ENCODE measurements at regions of chr11 and their contacts with region 1.

Region 1: GRCh38 chr11:69296890-69297786 is 3.2 kb downstream of the MYEOV start:
- DNase-seq: peak; percentile 80
- H3K4me3 Mint-ChIP-seq: peak overlapping the region; percentile 46
- H3K27ac Mint-ChIP-seq: peak overlapping the region; percentile 79
- H3K4me1 Mint-ChIP-seq: peaks cover 43% of the 10 kb centered on the region
- H3K27me3 Mint-ChIP-seq: no peaks in the 10 kb centered on the region

Region 2: DNA sequence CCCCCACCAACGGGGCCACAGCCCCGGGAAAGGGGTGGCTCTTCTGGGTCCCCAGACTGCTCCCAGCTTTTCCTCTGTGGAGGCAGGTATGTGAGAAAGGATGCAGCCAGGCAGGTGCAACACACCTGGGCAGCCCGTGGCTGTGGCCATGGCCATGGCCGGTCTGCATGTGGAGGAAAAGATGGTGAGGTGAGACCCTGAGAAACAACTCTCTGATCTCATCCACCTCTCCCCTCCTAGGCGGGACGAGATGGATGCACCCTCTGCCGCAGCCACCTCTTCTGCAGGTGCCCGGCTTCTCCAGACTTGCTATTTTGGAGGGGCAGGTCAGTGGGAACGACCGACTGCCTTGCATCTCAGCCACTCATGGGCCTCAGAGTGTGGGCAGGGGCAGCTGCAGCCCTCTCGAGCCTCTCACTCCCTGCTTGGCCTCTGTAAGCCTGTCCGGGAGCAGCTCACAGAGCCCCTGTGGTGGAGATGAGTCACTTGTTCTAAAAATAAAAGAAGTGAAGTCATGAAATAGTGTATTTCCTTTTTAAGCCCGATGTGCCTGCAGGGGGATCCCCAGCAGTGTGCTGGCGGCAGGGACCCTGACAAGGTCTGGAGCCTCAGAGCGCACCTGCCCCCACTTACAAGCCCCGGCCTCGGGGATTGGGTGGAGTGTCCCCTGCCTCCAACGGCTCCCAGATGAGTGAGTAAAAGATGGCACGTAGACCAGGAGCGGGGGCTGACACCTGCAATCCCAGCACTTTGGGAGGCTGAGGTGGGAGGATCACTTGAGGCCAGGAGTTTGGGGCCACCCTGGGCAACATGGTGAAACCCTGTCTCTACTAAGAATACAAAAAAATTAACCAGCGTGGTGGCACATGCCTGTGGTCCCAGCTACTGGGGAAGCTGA is 130.7 kb before region 1 on chr11:
- intact Hi-C with region 1: loop called (anchors 2 kb)
- DNase-seq: peak; percentile 24
- H3K4me3 Mint-ChIP-seq: peak overlapping the region; percentile 45
- H3K27ac Mint-ChIP-seq: peak overlapping the region; percentile 79
- H3K4me1 Mint-ChIP-seq: peaks cover 13% of the 10 kb centered on the region
- H3K27me3 Mint-ChIP-seq: peaks cover 12% of the 10 kb centered on the region

Region 3: GRCh38 chr11:69311767-69312385 is 14.7 kb after region 1 on chr11:
- intact Hi-C with region 1: loop called (anchors 1 kb)
- DNase-seq: no peak
- H3K4me3 Mint-ChIP-seq: no peak overlapping the region
- H3K27ac Mint-ChIP-seq: peak overlapping the region; percentile 81
- H3K4me1 Mint-ChIP-seq: peaks cover 14% of the 10 kb centered on the region
- H3K27me3 Mint-ChIP-seq: no peaks in the 10 kb centered on the region

Region 4: DNA sequence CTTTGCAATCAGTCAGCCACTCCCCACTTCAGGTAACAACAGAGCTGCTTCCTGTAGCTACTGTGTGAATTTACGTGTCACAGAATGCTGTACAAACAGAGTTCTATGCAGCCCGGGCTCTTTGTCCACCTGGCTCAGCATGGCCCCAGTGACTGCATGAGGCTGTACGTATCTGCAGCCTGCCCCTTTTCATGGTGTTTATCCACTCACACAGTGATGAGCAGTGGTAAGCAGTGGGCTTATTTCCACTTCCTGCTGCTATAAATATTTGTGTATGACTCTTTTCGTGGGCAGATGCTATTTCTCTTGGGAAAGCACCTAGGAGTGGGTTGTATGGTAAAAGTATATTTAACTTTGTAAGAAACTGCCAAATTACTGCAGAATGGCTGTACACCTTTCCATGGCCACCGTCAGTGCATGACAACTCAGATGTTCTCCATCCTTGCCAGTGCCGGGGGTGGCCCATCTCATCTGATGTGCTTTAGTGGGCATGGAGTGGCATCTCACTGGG is 40.1 kb after region 1 on chr11:
- intact Hi-C with region 1: loop called (anchors 1 kb)
- DNase-seq: peak; percentile 9
- H3K4me3 Mint-ChIP-seq: no peak overlapping the region
- H3K27ac Mint-ChIP-seq: peak overlapping the region; percentile 79
- H3K4me1 Mint-ChIP-seq: peaks cover 29% of the 10 kb centered on the region
- H3K27me3 Mint-ChIP-seq: peaks cover 8% of the 10 kb centered on the region

Region 5: DNA sequence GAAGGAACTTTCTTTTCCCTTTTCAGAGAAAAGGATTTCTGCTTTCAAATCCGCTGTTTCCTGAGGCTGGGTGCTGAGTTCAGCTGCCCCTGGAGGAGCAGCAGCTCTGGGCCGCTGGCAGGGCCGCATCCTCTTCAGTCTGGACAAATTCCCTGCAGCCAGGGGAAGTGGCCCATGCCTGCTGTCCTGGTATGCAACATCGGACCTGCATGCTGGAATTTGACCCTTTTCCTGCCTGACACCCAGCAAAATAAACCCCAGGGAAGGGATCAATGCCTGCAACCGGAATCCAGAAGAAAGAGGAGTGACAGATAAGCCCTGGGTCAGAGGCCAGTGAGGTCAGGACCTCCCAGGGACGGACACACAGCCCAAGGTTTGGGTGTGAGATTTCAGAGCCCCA is 130.2 kb after region 1 on chr11:
- intact Hi-C with region 1: loop called (anchors 5 kb)
- DNase-seq: no peak
- H3K4me3 Mint-ChIP-seq: no peak overlapping the region
- H3K27ac Mint-ChIP-seq: no peak overlapping the region
- H3K4me1 Mint-ChIP-seq: peaks cover 11% of the 10 kb centered on the region
- H3K27me3 Mint-ChIP-seq: no peaks in the 10 kb centered on the region

Region 6: DNA sequence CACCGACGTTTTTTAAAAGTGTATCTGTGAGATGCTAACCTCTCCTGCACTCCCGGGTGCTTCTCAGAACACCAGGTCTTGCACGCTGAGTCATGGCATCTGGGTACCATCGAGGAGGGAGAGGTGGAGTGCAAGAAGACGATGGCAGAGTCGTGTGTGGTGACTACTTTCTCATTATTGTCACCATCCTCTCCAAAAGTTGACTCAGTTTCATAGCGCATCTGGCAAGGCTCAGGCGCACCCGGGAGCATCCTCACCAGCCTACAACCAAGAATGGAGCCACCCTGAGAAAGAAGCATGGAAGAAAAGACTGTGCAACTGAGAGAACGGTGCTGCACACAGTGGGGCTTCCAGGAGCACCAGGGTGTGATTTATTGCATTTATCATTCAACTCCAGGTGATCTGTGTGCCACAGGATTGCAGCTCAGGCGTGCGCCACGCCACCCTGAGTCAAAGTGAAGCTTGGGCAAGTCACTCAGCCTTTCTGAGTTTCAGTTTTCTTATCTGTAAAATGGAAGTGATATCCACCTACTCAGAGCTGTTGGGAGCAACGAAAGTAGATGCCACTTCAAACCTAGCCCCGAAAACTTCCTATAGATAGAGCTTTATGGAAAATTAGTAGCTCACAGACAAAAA is 249.7 kb after region 1 on chr11:
- intact Hi-C with region 1: loop called (anchors 1 kb)
- DNase-seq: no peak
- H3K4me3 Mint-ChIP-seq: no peak overlapping the region
- H3K27ac Mint-ChIP-seq: no peak overlapping the region
- H3K4me1 Mint-ChIP-seq: peaks cover 9% of the 10 kb centered on the region
- H3K27me3 Mint-ChIP-seq: peaks cover 23% of the 10 kb centered on the region